ENCODE measurements at regions of chr1 and their contacts with region 1.

Region 1: GRCh38 chr1:8396786-8397406 is 79.0 kb downstream of the SLC45A1 start:
- DNase-seq: peak; percentile 97
- ATAC-seq: peak; percentile 85
- H3K4me3 ChIP-seq: no peak overlapping the region
- H3K27ac ChIP-seq: peak overlapping the region; percentile 97
- H3K4me1 ChIP-seq: peaks cover 57% of the 10 kb centered on the region
- H3K27me3 ChIP-seq: no peaks in the 10 kb centered on the region
- CTCF ChIP-seq: no peak

Region 2: DNA sequence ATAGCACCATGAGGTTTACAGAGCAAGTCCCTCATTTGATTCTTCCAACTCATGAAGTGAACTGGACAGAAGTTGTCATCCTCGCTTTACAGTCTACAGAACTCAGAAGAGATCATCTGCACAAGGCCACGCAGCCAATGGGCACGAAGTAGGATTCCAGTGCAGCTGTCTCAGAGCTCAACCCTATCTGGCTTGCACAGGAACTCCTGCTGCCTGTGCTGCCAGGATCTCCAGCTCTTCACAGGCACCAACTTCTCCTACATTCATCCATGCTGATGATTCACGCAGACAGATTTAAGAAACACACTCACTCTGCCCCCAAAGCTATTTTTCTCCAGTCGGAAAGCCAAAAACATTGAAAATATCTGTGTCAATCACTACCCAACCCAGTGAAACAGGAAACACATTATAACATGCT is 263.5 kb after region 1 on chr1:
- CTCF ChIA-PET with region 1: no interaction called
- POLR2A ChIA-PET with region 1: no interaction called
- intact Hi-C with region 1: loop called (anchors 5 kb)
- DNase-seq: peak; percentile 60
- ATAC-seq: peak; percentile 46
- H3K4me3 ChIP-seq: peak overlapping the region; percentile 32; the same call in 1 of the 2 replicates
- H3K27ac ChIP-seq: peak overlapping the region; percentile 97
- H3K4me1 ChIP-seq: peaks cover 49% of the 10 kb centered on the region
- H3K27me3 ChIP-seq: no peaks in the 10 kb centered on the region
- CTCF ChIP-seq: no peak